Activated CD8-positive, alpha-beta memory T cell treated with anti-CD3 and anti-CD28 coated beads, Interleukin-2, amount 10 ng/mL, durations not matched to agents 7 days and 5 days (primary cell): ENCODE measurements at regions of chr15 and their contacts with region 1.

Region 1: DNA sequence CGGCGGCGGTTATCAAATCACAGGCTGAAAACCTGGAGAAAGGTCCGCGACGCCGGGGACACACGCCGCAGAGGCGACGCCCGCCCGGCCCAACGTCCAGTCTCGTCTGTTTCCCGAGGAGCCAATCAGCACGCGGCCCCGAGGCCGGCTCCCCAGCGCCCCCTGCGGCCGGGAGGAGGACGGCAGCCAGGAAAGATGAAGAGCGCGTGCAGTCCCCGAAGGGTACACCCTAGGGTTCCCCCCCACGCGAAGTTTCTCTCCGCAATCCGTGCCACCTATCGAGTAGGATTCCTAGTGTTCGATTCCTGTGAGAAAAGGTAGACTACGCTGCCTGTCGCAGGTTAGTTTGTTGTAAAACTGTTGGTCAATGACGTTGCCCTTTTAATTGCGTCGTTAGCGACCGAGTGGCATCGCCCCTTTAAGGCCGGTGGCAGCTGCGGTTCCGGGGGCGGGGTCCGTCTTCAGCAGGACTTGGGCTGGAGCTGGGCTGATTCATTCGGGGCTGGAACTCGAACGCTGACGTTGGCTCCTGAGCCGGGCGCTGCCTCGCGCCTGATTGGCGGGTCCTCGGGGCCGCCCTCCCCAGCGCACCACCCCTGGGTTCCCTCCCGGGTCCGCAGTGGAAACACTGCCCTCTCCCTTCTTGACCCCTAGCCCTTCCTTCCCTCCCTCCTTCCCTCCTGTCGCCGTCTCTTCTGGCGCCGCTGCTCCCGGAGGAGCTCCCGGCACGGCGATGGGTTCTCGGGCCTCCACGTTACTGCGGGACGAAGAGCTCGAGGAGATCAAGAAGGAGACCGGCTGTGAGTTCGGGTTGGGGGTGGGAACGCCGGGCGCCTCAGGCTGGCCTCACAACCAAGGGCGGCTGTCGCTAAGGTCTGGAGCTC is at the starts of genes CHP1 and EXD1:
- DNase-seq: peak; percentile 98
- ATAC-seq: peak; percentile 100
- H3K4me3 Mint-ChIP-seq: peak within 1 kb of the TSS; percentile 88
- H3K27ac Mint-ChIP-seq: peak within 1 kb of the TSS; percentile 86
- H3K4me1 Mint-ChIP-seq: peaks cover 25% of the 10 kb centered on the region
- H3K27me3 Mint-ChIP-seq: peaks cover 17% of the 10 kb centered on the region
- total RNA-seq, gene CHP1: 47.5 to 54.1 TPM
- total RNA-seq, gene EXD1: not detected

Region 2: DNA sequence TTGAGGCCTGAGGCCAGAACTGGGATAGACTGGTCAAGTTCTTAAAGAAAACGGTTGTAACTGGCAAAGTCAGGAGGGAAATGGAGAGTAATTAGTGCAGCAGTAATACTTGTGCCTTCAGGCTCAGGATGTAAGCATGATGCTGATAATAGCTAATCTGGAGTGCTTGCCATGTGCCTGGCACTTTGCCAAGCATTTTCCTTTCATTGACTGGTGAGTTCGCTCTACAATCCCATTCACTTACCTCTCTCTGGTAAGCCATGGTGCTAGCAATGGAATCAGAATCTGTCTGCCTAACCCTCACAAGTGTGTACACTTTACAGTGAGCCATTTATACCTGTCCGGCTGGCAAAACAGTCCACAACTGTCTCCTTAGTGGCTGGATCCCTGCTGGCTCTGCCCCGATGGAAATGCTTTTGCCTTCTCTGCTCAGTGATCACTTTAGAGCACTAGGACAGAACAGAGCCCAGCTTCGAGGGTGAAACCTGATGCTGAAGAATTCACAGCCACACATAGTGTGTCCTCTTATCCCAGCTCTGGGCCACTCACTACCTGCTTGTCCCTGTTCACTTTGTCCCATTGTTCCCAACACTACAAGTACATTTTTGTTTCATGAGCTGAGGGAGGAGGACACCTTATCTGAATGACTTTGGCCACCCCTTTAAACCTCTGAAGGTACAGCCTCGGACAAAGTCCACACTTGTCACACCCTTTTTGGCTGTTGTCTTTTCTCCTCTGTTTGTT is 10.5 kb after region 1 on chr15:
- CTCF ChIA-PET with region 1: interaction called, 16 read pairs
- DNase-seq: no peak
- ATAC-seq: no peak
- H3K4me3 Mint-ChIP-seq: no peak overlapping the region
- H3K27ac Mint-ChIP-seq: no peak overlapping the region
- H3K4me1 Mint-ChIP-seq: peaks cover 10% of the 10 kb centered on the region
- H3K27me3 Mint-ChIP-seq: no peaks in the 10 kb centered on the region